Sigmoid colon (tissue), 7 donors: ENCODE measurements at regions of chr5 and their contacts with region 1.

Region 1: DNA sequence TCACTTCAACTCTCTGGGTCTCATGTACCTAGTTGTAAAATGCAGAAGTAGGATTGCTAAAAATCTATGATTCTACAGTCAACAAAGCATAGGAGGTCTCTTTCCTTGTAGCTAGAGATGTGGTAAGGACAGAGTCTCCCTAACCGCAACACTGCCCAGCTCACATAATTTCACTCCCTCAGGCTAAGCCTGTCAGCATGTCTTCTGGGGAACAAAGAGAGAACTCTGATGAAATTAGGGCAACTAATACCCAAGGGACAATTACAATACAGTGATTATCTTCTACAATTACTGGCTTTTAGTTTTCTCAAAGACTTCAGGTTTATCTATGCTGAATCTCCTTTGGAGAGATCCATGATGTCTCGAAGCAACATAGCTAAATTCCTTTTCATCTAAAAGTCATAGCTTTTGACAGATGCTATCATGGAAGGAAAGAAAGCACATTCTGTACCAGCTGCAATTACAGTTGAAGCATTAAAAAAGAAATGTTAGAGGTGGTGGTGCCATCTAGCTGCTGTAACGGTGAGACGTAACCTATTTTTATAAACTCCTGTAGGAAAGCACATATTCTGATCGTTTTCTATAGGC is 141.1 kb upstream of the TARS1 start:
- DNase-seq: no peak
- H3K4me3 ChIP-seq: no peak overlapping the region
- H3K27ac ChIP-seq: peak overlapping the region in 3 of 4 donors; percentile 62 to 66 (median 65)
- H3K4me1 ChIP-seq: peaks cover 0 to 36% (median 18%) of the 10 kb centered on the region in 4 donors
- H3K27me3 ChIP-seq: no peaks in the 10 kb centered on the region
- CTCF ChIP-seq: peak; percentile 13 to 41 (median 32)
- EP300 ChIP-seq: peak in 1 of 4 donors; percentile 48
- POLR2A ChIP-seq: no peak

Region 2: GRCh38 chr5:33180900-33181299 is 118.8 kb before region 1 on chr5:
- intact Hi-C with region 1: loop called (anchors 5 kb)
- DNase-seq: no peak
- H3K4me3 ChIP-seq: no peak overlapping the region
- H3K27ac ChIP-seq: no peak overlapping the region
- H3K4me1 ChIP-seq: no peaks in the 10 kb centered on the region
- H3K27me3 ChIP-seq: no peaks in the 10 kb centered on the region
- CTCF ChIP-seq: peak in 1 of 4 experiments; percentile 43
- EP300 ChIP-seq: no peak
- POLR2A ChIP-seq: no peak

Region 3: DNA sequence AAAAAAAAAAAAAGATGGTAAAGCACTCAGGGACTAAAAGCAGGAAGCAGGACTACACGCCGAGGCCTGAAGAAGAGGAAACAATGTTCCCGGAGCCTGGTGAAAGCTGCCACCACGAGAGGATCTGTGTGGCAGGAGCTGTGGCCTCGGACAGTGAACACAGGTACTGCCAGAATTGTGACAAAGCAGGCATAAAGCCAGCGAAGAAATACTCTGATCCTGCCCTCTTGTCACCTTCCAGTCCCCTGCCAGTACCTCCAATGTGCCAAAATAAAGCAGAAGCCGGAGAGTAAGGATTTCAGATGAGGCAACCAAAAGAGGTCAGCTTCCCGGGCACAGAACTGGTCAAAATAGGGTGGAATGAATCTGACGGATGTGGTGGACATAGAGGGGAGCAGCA is 70.5 kb before region 1 on chr5:
- intact Hi-C with region 1: no loop called
- DNase-seq: no peak
- H3K4me3 ChIP-seq: no peak overlapping the region
- H3K27ac ChIP-seq: no peak overlapping the region
- H3K4me1 ChIP-seq: peaks cover 0 to 44% (median 29%) of the 10 kb centered on the region in 4 donors
- H3K27me3 ChIP-seq: no peaks in the 10 kb centered on the region
- CTCF ChIP-seq: no peak
- EP300 ChIP-seq: no peak
- POLR2A ChIP-seq: no peak

Region 4: DNA sequence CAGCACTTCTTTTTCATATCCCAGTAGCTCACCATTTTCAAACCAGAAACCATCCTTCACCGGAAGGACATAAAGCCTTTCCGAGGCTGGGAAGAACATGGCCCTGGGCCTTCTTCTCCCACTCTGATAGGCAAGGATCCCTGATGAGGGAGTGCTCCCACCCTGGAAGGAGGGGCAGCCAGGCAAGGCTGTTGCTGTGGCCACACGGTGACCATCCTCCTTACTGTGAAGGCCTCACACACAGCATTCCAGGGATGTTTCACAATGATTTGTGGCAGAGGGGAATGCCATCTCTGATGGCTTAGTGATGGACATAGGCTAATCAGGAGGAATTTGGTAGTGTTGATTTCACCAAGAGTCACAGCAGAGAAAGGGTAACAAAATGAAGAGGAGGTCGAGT is 461.4 kb after region 1 on chr5:
- intact Hi-C with region 1: no loop called
- DNase-seq: no peak
- H3K4me3 ChIP-seq: no peak overlapping the region
- H3K27ac ChIP-seq: no peak overlapping the region
- H3K4me1 ChIP-seq: no peaks in the 10 kb centered on the region
- H3K27me3 ChIP-seq: no peaks in the 10 kb centered on the region
- CTCF ChIP-seq: no peak
- EP300 ChIP-seq: no peak
- POLR2A ChIP-seq: no peak

Region 5: GRCh38 chr5:33905381-33905780 is 605.7 kb after region 1 on chr5:
- intact Hi-C with region 1: no loop called
- DNase-seq: no peak
- H3K4me3 ChIP-seq: no peak overlapping the region
- H3K27ac ChIP-seq: no peak overlapping the region
- H3K4me1 ChIP-seq: no peaks in the 10 kb centered on the region
- H3K27me3 ChIP-seq: no peaks in the 10 kb centered on the region
- CTCF ChIP-seq: no peak
- EP300 ChIP-seq: no peak
- POLR2A ChIP-seq: no peak